B cell (primary cell): ENCODE measurements at regions of chr15 and their contacts with region 1.

Region 1: GRCh38 chr15:59528965-59529402 is 82.6 kb upstream of the GCNT3 start:
- DNase-seq: peak; percentile 82
- ATAC-seq: peak; percentile 69
- H3K4me3 ChIP-seq: no peak overlapping the region
- H3K4me3 Mint-ChIP-seq: no peak overlapping the region
- H3K27ac ChIP-seq: peak overlapping the region in 1 of 2 donors; percentile 30
- H3K27ac Mint-ChIP-seq: peak overlapping the region; percentile 54
- H3K4me1 ChIP-seq: peaks cover 18 to 33% of the 10 kb centered on the region in 2 donors
- H3K4me1 Mint-ChIP-seq: peaks cover 25% of the 10 kb centered on the region
- H3K27me3 ChIP-seq: no peaks in the 10 kb centered on the region
- H3K27me3 Mint-ChIP-seq: no peaks in the 10 kb centered on the region
- CTCF ChIP-seq: peak; percentile 86

Region 2: GRCh38 chr15:58957101-58957973 is 571.6 kb before region 1 on chr15:
- CTCF ChIA-PET with region 1: interaction called, 53 read pairs
- POLR2A ChIA-PET with region 1: no interaction called
- intact Hi-C with region 1: no loop called
- DNase-seq: peak; percentile 83
- ATAC-seq: peak; percentile 98
- H3K4me3 ChIP-seq: no peak overlapping the region
- H3K4me3 Mint-ChIP-seq: no peak overlapping the region
- H3K27ac ChIP-seq: no peak overlapping the region
- H3K27ac Mint-ChIP-seq: peak overlapping the region; percentile 64
- H3K4me1 ChIP-seq: peaks cover 3 to 7% of the 10 kb centered on the region in 2 donors
- H3K4me1 Mint-ChIP-seq: peaks cover 5% of the 10 kb centered on the region
- H3K27me3 ChIP-seq: no peaks in the 10 kb centered on the region
- H3K27me3 Mint-ChIP-seq: no peaks in the 10 kb centered on the region
- CTCF ChIP-seq: peak; percentile 83

Region 3: DNA sequence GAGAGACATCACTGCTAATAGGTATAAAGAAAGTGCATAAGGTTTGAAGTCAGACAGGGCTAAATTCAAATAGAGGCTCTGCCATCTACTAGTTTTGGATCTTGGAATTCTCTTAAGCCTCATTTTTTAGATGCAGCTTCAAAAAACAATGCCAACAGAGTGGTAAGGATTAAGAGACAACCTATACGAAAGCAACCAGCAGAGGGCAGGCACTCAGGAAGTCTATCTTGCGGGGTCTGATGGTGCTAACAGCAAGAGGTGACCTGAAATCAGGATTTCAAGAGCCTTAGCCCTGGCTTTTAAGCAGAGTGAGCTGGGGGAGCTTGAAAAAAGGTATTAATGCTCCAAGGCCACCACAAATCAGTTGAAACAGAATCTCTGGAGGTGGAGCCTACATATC is 281.6 kb before region 1 on chr15:
- CTCF ChIA-PET with region 1: interaction called, 58 read pairs
- POLR2A ChIA-PET with region 1: interaction called, 5 read pairs
- intact Hi-C with region 1: loop called (anchors 1 kb)
- DNase-seq: peak; percentile 81
- ATAC-seq: peak; percentile 52
- H3K4me3 ChIP-seq: no peak overlapping the region
- H3K4me3 Mint-ChIP-seq: no peak overlapping the region
- H3K27ac ChIP-seq: no peak overlapping the region
- H3K27ac Mint-ChIP-seq: peak overlapping the region; percentile 37
- H3K4me1 ChIP-seq: peaks cover 30 to 42% of the 10 kb centered on the region in 2 donors
- H3K4me1 Mint-ChIP-seq: peaks cover 59% of the 10 kb centered on the region
- H3K27me3 ChIP-seq: no peaks in the 10 kb centered on the region
- H3K27me3 Mint-ChIP-seq: no peaks in the 10 kb centered on the region
- CTCF ChIP-seq: peak; percentile 80

Region 4: GRCh38 chr15:59516655-59517461 is 12.1 kb before region 1 on chr15:
- CTCF ChIA-PET with region 1: interaction called, 207 read pairs
- POLR2A ChIA-PET with region 1: interaction called, 4 read pairs
- intact Hi-C with region 1: no loop called
- DNase-seq: peak; percentile 77
- ATAC-seq: peak; percentile 77
- H3K4me3 ChIP-seq: peak overlapping the region in 2 of 5 experiments; percentile 11 to 25
- H3K4me3 Mint-ChIP-seq: peak overlapping the region; percentile 70
- H3K27ac ChIP-seq: peak overlapping the region; percentile 93 to 94
- H3K27ac Mint-ChIP-seq: peak overlapping the region; percentile 95
- H3K4me1 ChIP-seq: peaks cover 63 to 68% of the 10 kb centered on the region in 2 donors
- H3K4me1 Mint-ChIP-seq: peaks cover 56% of the 10 kb centered on the region
- H3K27me3 ChIP-seq: no peaks in the 10 kb centered on the region
- H3K27me3 Mint-ChIP-seq: no peaks in the 10 kb centered on the region
- CTCF ChIP-seq: no peak

Region 5: DNA sequence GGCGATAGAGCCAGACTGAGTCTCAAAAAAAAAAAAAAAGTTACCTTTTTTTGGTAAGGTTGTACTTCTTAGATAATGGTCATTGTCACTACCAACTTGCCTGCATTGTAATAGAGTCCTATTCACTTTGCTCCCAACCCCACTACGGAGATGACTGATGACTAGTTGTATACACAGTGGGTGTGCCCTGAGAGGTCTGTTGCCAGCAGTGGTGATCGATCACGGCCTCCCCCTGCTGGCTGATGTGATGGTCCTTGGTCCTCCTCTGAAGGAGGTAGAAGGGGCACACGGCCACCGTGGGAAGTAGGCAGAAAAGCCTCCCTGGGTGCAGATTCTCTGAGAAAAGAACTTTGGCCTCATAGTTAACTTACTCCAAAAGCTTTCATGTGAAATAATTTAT is 93.3 kb after region 1 on chr15:
- CTCF ChIA-PET with region 1: interaction called, 17 read pairs
- POLR2A ChIA-PET with region 1: no interaction called
- intact Hi-C with region 1: loop called (anchors 1 kb)
- DNase-seq: peak; percentile 62
- ATAC-seq: peak; percentile 80
- H3K4me3 ChIP-seq: no peak overlapping the region
- H3K4me3 Mint-ChIP-seq: no peak overlapping the region
- H3K27ac ChIP-seq: no peak overlapping the region
- H3K27ac Mint-ChIP-seq: no peak overlapping the region
- H3K4me1 ChIP-seq: no peaks in the 10 kb centered on the region
- H3K4me1 Mint-ChIP-seq: no peaks in the 10 kb centered on the region
- H3K27me3 ChIP-seq: peaks cover 0 to 19% (median 3%) of the 10 kb centered on the region in 4 experiments
- H3K27me3 Mint-ChIP-seq: peaks cover 21% of the 10 kb centered on the region
- CTCF ChIP-seq: peak; percentile 28

Region 6: DNA sequence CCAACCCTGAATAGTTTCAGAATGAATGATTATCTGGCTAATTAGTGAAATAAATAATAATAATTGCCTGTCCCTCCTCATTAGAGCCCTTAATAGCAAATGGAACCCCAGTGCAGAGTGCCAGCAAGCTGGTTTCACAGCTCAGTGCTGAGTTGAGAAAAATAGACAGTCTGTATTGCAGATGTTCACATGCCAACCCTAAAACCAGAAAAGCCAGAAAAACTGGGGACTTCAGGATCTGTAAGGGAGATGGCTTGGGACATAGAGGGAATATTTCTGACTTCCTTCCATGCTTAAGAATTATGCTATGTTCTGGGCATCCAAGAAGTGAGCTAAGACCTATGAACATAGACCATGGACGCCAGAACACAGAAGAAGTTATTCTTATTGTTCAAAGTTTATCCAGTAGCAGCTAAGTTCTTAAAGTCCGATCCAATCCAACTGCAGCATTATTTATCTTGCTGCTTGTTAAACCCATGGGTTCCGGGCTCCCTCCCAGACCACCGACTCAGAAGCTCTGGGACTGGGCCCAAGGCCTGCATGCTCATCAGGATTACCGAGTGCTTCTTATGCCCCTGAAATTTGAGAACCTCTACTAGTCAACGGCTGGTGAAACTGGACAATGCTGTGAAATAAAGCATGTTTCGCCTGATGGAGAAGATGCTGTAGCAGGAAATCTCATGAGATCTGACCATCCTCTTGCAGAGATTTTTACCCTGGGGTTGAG is 633.4 kb after region 1 on chr15:
- CTCF ChIA-PET with region 1: no interaction called
- POLR2A ChIA-PET with region 1: no interaction called
- intact Hi-C with region 1: no loop called
- DNase-seq: no peak
- ATAC-seq: no peak
- H3K4me3 ChIP-seq: no peak overlapping the region
- H3K4me3 Mint-ChIP-seq: no peak overlapping the region
- H3K27ac ChIP-seq: no peak overlapping the region
- H3K27ac Mint-ChIP-seq: no peak overlapping the region
- H3K4me1 ChIP-seq: no peaks in the 10 kb centered on the region
- H3K4me1 Mint-ChIP-seq: no peaks in the 10 kb centered on the region
- H3K27me3 ChIP-seq: peaks cover 0 to 3% (median 0%) of the 10 kb centered on the region in 4 experiments
- H3K27me3 Mint-ChIP-seq: peaks cover 42% of the 10 kb centered on the region
- CTCF ChIP-seq: no peak